Body of pancreas (tissue), 4 donors: ENCODE measurements at regions of chr1 and their contacts with region 1.

Region 1: DNA sequence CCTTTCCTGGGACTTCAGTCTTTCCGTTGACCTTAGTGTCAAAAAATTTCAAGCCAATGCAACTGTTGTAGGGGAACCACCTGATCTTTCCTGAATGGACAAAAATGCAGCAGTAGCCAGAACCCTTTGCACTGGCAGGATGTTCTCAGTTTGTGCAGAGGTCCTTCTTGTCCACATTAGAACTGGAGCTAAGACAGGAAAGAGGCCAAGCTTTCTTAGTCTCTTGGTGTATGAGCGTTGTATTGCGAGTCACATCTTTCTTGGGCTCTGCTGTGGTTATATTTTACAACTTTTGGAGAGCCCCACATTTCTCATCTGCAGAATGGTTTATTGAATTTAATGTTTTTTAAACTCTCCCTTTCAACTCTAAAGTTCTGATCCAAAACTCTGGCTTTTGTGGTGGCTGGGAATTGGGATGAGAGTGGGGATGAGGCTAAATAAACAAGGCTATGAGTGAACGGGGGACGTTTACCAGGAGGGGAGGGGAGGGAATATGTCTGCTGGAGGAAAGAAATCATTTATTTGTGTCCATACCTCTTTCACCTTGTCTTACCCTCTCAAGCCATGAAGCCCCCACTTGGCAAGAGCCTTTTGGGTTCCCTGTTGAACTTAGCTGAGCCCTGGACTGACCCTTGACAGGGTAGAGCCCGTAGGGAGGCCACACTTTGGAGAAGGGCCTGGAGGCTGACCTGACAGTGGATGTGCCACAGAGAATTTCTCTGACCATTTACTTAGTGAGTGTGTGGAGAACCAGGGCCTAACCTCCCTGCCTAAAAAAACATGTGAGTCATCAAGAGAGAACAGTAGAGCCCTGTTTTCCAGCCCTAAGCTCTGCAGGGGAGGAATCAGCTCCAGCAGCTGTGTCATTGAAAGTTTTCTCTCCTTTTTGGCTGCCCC is 586 bp downstream of the CHI3L2 start:
- DNase-seq: peak in 3 of 4 donors; percentile 23 to 56 (median 53)
- ATAC-seq: peak; percentile 94
- H3K4me3 ChIP-seq: no peak overlapping the region
- H3K27ac ChIP-seq: peak overlapping the region; percentile 54 to 83 (median 69)
- H3K4me1 ChIP-seq: peaks cover 21% of the 10 kb centered on the region
- H3K27me3 ChIP-seq: no peaks in the 10 kb centered on the region
- CTCF ChIP-seq: no peak
- POLR2A ChIP-seq: peak in 2 of 3 donors; percentile 8 to 37

Region 2: GRCh38 chr1:110816930-110817329 is 411.2 kb before region 1 on chr1:
- intact Hi-C with region 1: no loop called
- DNase-seq: no peak
- ATAC-seq: no peak
- H3K4me3 ChIP-seq: no peak overlapping the region
- H3K27ac ChIP-seq: no peak overlapping the region
- H3K4me1 ChIP-seq: no peaks in the 10 kb centered on the region
- H3K27me3 ChIP-seq: no peaks in the 10 kb centered on the region
- CTCF ChIP-seq: no peak
- POLR2A ChIP-seq: no peak

Region 3: GRCh38 chr1:111269825-111270406 is 41.8 kb after region 1 on chr1:
- intact Hi-C with region 1: no loop called
- DNase-seq: no peak
- ATAC-seq: no peak
- H3K4me3 ChIP-seq: no peak overlapping the region
- H3K27ac ChIP-seq: no peak overlapping the region
- H3K4me1 ChIP-seq: peaks cover 10% of the 10 kb centered on the region
- H3K27me3 ChIP-seq: peaks cover 0 to 11% of the 10 kb centered on the region in 2 donors
- CTCF ChIP-seq: no peak
- POLR2A ChIP-seq: no peak

Region 4: GRCh38 chr1:111399792-111400610 is 171.9 kb after region 1 on chr1:
- intact Hi-C with region 1: loop called (anchors 5 kb)
- DNase-seq: peak; percentile 61 to 77 (median 73)
- ATAC-seq: peak; percentile 48
- H3K4me3 ChIP-seq: no peak overlapping the region
- H3K27ac ChIP-seq: no peak overlapping the region
- H3K4me1 ChIP-seq: no peaks in the 10 kb centered on the region
- H3K27me3 ChIP-seq: no peaks in the 10 kb centered on the region
- CTCF ChIP-seq: peak; percentile 27 to 85 (median 75)
- POLR2A ChIP-seq: no peak